Colonic mucosa (tissue), 4 donors: ENCODE measurements at regions of chr9 and their contacts with region 1.

Region 1: DNA sequence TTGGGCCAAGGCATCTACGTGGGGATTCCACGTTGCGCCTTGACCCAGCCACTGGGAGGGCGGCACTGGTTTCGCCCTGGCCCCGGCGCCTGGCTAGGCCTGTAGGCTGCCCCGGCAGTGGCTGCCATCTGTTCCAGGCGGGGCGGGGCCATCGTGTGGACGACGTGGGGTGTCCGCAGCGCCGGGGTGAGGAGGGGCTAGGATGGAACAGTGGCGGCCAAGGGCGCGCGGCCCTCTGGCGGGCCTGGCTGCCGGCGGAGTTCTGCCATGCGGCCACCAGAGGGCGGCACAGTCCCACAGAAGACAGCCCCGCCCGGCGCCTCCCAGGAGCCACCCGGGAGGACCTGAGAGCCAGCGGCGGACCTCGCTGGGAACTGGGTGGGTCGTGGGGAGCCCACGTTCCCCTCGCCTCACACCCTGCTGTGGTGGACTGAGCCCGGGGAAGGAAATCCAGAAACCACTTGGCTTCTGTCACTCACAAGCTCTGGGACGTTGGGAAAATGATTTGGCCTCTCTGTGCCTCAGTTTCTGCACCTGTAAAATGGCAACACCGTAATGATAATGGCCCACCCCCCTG is 22.6 kb upstream of the RAPGEF1 start:
- DNase-seq: peak; percentile 62
- H3K4me3 ChIP-seq: no peak overlapping the region
- H3K27ac ChIP-seq: no peak overlapping the region
- H3K4me1 ChIP-seq: no peaks in the 10 kb centered on the region
- H3K27me3 ChIP-seq: no peaks in the 10 kb centered on the region
- CTCF ChIP-seq: peak; percentile 93

Region 2: DNA sequence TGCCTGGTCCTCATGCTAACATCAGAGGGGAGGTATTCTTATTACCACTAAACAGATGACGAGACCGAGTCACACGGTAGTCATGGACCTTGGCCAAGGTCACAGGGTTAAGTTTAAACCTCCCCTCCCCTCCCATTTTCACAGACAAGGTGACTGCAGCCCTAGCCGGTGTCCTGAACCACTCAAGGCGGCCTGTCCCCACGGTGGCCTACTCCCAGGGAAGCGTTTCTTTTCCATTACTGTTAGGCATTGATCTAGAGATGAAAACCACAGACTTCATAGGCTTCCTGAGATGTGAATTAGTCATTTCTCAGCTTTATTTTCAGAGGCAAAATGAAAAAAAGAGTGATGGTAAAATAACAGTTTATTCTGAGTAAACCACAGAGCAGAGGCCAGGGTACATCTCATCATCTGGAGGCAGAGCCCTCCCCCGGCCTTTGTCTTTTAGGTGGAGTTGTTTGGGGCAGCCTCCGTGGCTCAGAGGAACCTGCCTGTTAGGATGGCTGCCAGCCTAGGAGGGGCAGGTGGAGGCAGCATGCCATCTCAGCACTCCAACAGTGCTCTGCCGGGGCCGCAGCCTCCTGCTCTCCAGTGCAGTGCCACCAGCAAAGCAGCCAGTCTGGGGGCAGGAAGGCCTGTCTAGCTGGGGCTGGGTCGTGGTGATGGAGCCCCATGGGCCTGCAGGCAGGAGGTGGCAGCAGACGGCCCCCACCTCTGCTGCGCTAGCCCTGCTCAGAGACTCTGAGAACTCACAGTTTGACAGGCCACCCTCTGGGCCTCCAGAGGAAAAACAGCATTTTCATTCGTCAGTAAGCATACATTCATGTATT is 93.8 kb before region 1 on chr9:
- intact Hi-C with region 1: no loop called
- DNase-seq: no peak
- H3K4me3 ChIP-seq: no peak overlapping the region
- H3K27ac ChIP-seq: peak overlapping the region; percentile 51
- H3K4me1 ChIP-seq: peaks cover 9% of the 10 kb centered on the region
- H3K27me3 ChIP-seq: no peaks in the 10 kb centered on the region
- CTCF ChIP-seq: no peak

Region 3: DNA sequence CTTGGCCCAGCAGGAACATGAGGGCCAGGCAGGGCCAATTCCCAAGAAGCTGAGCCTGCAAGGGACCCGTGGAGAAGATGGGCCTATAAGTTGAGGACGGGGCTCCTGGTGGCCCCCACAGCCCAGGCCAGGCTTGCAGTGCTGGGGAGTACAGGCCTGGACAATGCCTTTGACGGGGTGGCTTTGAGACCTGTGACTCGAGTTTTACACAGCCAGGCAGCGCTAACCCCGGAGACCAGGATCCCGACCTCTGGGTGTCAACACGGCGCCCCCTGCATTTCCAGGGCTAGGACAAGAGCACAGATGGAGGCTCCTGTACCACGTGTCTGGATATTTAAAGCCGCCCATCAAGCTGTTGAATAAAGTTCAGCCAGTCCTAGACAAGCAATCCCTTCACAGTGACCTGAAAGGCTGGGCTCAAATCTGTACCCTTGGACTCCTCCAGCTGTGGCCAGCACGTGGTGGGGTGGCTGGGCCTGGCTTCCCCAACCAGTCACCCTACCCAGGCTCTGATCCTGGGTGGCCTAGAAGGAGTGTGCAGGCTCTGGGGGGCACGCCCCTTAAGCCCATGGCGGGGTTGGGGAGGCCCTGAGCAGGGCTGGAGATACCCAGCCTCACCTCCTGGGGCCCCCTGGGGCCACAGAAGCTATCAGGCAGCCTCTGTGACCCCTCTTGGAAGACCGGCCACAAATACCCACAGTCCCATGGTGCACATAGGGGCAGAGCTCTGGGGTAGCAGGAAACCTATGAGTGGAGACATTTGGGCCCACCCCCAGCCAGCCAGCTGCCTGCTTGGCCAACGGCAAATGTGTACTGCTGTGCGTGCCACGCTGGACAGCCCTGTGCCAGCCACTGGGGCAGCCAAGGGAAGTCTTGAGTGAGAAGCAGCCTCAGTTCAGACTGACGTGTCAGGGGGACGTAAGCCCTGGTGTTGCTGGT is 488.1 kb after region 1 on chr9:
- intact Hi-C with region 1: loop called (anchors 5 kb)
- DNase-seq: no peak
- H3K4me3 ChIP-seq: no peak overlapping the region
- H3K27ac ChIP-seq: no peak overlapping the region
- H3K4me1 ChIP-seq: no peaks in the 10 kb centered on the region
- H3K27me3 ChIP-seq: peaks cover 6% of the 10 kb centered on the region
- CTCF ChIP-seq: no peak